B cell (primary cell): ENCODE measurements at regions of chr7 and their contacts with region 1.

Region 1: GRCh38 chr7:22697876-22698606 is 29.0 kb upstream of the IL6 start:
- DNase-seq: peak; percentile 87
- ATAC-seq: peak; percentile 70
- H3K4me3 ChIP-seq: peak overlapping the region in 1 of 5 experiments; percentile 40
- H3K4me3 Mint-ChIP-seq: peak overlapping the region; percentile 37
- H3K27ac ChIP-seq: peak overlapping the region; percentile 87 to 91
- H3K27ac Mint-ChIP-seq: peak overlapping the region; percentile 84
- H3K4me1 ChIP-seq: peaks cover 84 to 91% of the 10 kb centered on the region in 2 donors
- H3K4me1 Mint-ChIP-seq: peaks cover 86% of the 10 kb centered on the region
- H3K27me3 ChIP-seq: no peaks in the 10 kb centered on the region
- H3K27me3 Mint-ChIP-seq: no peaks in the 10 kb centered on the region
- CTCF ChIP-seq: no peak

Region 2: DNA sequence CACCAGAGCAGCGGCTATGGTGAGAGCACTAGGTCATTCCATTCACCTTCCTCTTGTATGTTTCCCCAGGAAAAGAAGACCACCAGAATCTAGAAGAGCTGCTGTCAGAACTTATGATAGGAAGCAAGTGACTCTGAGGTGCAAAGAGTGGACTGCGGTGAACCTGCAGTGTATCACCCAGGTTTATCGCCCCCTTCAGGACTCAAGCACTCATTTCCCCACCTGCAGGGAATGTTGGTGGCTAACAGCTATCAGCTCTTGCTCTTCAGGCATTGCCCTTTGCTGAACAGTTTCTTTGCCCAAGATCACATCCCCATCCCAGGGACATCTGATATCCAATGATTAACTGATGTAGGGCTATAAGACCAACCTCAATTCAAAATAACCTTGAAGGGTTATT is 37.3 kb before region 1 on chr7:
- CTCF ChIA-PET with region 1: interaction called, 5 read pairs
- POLR2A ChIA-PET with region 1: interaction called, 4 read pairs
- intact Hi-C with region 1: loop called (anchors 1 kb)
- DNase-seq: peak; percentile 56
- ATAC-seq: no peak
- H3K4me3 ChIP-seq: peak overlapping the region; percentile 38 to 56 (median 44)
- H3K4me3 Mint-ChIP-seq: peak overlapping the region; percentile 71
- H3K27ac ChIP-seq: peak overlapping the region; percentile 99 to 100
- H3K27ac Mint-ChIP-seq: peak overlapping the region; percentile 92
- H3K4me1 ChIP-seq: peaks cover 79 to 84% of the 10 kb centered on the region in 2 donors
- H3K4me1 Mint-ChIP-seq: peaks cover 78% of the 10 kb centered on the region
- H3K27me3 ChIP-seq: no peaks in the 10 kb centered on the region
- H3K27me3 Mint-ChIP-seq: no peaks in the 10 kb centered on the region
- CTCF ChIP-seq: peak; percentile 51

Region 3: DNA sequence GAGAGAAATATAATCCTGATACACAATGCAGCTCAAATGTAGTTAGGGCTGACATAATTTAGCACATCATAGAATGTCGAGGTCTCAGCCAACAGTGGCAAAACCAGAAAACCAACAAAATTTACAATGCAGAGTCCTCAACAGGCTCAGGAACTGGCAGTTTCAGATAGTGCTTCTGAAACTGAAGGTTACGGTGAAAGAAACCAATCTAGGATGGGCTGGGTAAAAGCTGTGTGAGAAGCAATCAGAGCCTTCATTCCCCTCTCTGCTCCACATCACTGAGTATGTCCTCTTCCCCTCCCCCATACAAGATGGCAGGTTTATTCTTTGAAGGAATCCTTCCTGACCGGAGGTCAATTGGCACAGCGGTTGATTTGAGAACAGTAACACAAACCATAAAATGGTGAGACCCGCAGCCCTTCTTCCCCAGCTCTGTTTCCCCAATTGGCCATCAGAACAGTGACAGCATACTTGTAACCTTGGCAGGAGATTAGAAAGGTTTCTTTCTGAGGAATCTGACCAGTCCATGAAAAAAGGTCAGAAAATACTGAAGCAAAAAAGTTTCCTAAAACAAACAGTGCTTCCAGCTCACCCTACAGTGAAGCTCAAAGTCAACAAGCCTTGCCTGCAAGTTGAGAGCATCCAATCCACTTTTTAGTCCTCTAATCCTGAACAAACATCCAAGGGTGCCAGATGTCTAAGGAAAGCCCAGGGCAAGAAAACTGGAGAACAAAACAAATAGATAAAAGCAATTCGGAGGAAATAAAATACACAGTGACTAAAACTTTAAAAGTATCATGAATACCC is 25.0 kb before region 1 on chr7:
- CTCF ChIA-PET with region 1: interaction called, 16 read pairs
- POLR2A ChIA-PET with region 1: interaction called, 8 read pairs
- intact Hi-C with region 1: no loop called
- DNase-seq: peak; percentile 54
- ATAC-seq: peak; percentile 50
- H3K4me3 ChIP-seq: peak overlapping the region in 1 of 5 experiments; percentile 9
- H3K4me3 Mint-ChIP-seq: peak overlapping the region; percentile 72
- H3K27ac ChIP-seq: peak overlapping the region; percentile 69 to 81
- H3K27ac Mint-ChIP-seq: peak overlapping the region; percentile 91
- H3K4me1 ChIP-seq: peaks cover 76 to 80% of the 10 kb centered on the region in 2 donors
- H3K4me1 Mint-ChIP-seq: peaks cover 78% of the 10 kb centered on the region
- H3K27me3 ChIP-seq: no peaks in the 10 kb centered on the region
- H3K27me3 Mint-ChIP-seq: no peaks in the 10 kb centered on the region
- CTCF ChIP-seq: no peak

Region 4: GRCh38 chr7:22681312-22681711 is 16.7 kb before region 1 on chr7:
- CTCF ChIA-PET with region 1: interaction called, 16 read pairs
- POLR2A ChIA-PET with region 1: no interaction called
- intact Hi-C with region 1: loop called (anchors 1 kb)
- DNase-seq: peak; percentile 24
- ATAC-seq: peak; percentile 29
- H3K4me3 ChIP-seq: no peak overlapping the region
- H3K4me3 Mint-ChIP-seq: peak overlapping the region; percentile 15
- H3K27ac ChIP-seq: peak overlapping the region; percentile 46 to 66
- H3K27ac Mint-ChIP-seq: peak overlapping the region; percentile 72
- H3K4me1 ChIP-seq: peaks cover 87 to 90% of the 10 kb centered on the region in 2 donors
- H3K4me1 Mint-ChIP-seq: peaks cover 86% of the 10 kb centered on the region
- H3K27me3 ChIP-seq: no peaks in the 10 kb centered on the region
- H3K27me3 Mint-ChIP-seq: no peaks in the 10 kb centered on the region
- CTCF ChIP-seq: no peak

Region 5: GRCh38 chr7:22712999-22713398 is 15.0 kb after region 1 on chr7:
- CTCF ChIA-PET with region 1: interaction called, 9 read pairs
- POLR2A ChIA-PET with region 1: interaction called, 5 read pairs
- intact Hi-C with region 1: loop called (anchors 1 kb)
- DNase-seq: peak; percentile 79
- ATAC-seq: peak; percentile 84
- H3K4me3 ChIP-seq: peak overlapping the region in 1 of 5 experiments; percentile 3
- H3K4me3 Mint-ChIP-seq: peak overlapping the region; percentile 75
- H3K27ac ChIP-seq: peak overlapping the region; percentile 96 to 97
- H3K27ac Mint-ChIP-seq: peak overlapping the region; percentile 93
- H3K4me1 ChIP-seq: peaks cover 43 to 51% of the 10 kb centered on the region in 2 donors
- H3K4me1 Mint-ChIP-seq: peaks cover 61% of the 10 kb centered on the region
- H3K27me3 ChIP-seq: no peaks in the 10 kb centered on the region
- H3K27me3 Mint-ChIP-seq: no peaks in the 10 kb centered on the region
- CTCF ChIP-seq: no peak

Region 6: DNA sequence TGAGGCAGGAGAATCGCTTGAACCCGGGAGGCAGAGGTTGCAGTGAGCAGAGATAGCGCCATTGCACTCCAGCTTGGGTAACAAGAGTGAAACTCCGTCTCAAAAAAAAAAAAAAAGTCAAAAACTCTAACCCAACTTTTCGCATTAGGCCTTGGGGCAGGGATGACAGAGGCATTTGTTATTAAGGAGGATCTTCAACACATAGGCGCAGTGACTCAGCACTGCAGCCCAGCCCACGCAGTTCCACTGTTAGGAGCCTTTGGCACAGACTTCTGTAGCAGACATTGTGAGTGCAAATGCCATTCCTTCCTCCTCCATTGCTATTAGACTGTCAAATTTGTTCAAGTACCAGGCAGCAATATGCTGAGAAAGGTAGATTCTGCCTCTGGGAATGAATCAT is 364.4 kb after region 1 on chr7:
- CTCF ChIA-PET with region 1: no interaction called
- POLR2A ChIA-PET with region 1: no interaction called
- intact Hi-C with region 1: no loop called
- DNase-seq: no peak
- ATAC-seq: no peak
- H3K4me3 ChIP-seq: no peak overlapping the region
- H3K4me3 Mint-ChIP-seq: no peak overlapping the region
- H3K27ac ChIP-seq: no peak overlapping the region
- H3K27ac Mint-ChIP-seq: no peak overlapping the region
- H3K4me1 ChIP-seq: no peaks in the 10 kb centered on the region
- H3K4me1 Mint-ChIP-seq: no peaks in the 10 kb centered on the region
- H3K27me3 ChIP-seq: no peaks in the 10 kb centered on the region
- H3K27me3 Mint-ChIP-seq: peaks cover 3% of the 10 kb centered on the region
- CTCF ChIP-seq: no peak